GM12878 (cell line): ENCODE measurements at regions of chr1 and their contacts with region 1.

Region 1: DNA sequence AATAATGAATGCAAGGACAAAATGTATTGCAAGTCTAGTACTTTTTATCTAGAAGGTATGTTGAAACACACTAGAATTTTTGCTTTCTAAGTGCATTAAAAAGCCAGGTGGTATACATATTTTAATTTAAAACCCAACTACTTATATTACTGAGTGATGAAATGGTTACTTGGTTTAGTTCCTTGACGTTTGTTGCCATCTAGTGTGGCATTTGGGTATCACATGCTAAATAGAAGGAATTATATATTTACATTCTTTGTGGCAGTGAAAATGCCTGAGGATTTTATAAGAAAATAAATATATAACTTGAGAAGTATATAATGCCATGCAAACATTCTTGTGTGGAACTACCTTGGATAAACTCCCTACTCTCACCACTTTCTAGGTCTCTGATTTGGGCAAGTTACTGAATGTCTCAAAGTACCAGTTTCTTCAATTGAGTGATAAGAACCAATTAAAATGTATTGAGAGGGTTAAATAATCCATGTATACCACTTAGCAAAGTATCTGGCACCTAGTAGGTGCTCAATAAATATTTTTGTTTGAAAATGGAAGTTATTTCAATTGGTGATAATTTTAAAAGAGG is 69.6 kb downstream of the SDCCAG8 start:
- DNase-seq: no peak
- ATAC-seq: peak; percentile 74
- H3K4me3 ChIP-seq: no peak overlapping the region
- H3K27ac ChIP-seq: no peak overlapping the region
- H3K4me1 ChIP-seq: no peaks in the 10 kb centered on the region
- H3K27me3 ChIP-seq: no peaks in the 10 kb centered on the region
- CTCF ChIP-seq: peak; percentile 53 to 78 (median 63)
- EP300 ChIP-seq: no peak
- POLR2A ChIP-seq: no peak
- RAD21 ChIP-seq: peak; percentile 95

Region 2: DNA sequence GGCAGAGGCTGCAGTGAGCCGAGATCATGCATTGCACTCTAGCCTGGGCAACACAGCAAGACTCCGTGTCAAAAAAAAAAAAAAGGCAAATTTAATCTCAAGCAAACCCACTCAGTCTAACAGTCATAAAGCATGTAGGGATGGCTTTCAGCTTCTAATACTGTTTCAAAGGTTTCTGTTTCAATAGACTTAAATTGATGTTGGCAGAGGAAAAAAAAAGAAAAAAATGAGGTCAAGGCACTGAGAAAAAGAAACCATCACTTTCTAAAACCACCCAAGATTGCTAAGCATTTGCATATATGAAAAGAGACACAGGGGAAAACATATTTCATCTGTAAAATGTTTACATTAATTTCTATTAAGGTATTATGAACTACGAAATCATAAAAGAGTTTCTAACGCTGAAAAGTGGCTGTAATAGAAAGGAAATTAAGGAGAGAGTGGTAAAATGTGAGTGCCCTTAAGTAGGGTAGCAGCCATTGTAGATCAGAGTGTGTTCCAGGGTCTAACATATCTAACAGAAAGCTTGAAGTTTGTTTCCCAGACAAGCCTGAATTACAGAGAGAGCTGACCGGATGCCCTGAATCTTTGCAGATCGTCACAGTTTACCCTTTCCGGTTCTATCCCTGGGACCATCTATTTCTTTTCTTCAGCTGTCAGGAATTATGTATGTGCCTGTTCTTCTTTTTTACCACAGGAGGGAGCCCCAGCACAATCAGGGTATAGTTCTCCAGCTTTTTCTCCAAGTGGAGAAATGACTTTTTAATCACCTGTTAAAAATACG is 870.9 kb before region 1 on chr1:
- CTCF ChIA-PET with region 1: interaction called, 6 read pairs
- POLR2A ChIA-PET with region 1: no interaction called
- RAD21 ChIA-PET with region 1: no interaction called
- SMC1A ChIA-PET with region 1: interaction called, 3 read pairs
- in situ Hi-C with region 1: no loop called
- intact Hi-C with region 1: loop called (anchors 5 kb)
- DNase-seq: no peak
- ATAC-seq: peak; percentile 74
- H3K4me3 ChIP-seq: no peak overlapping the region
- H3K27ac ChIP-seq: no peak overlapping the region
- H3K4me1 ChIP-seq: no peaks in the 10 kb centered on the region
- H3K27me3 ChIP-seq: 0 out of 4 replicates have a peak, but pooled peaks cover 0 to 3% of the 10 kb centered on the region in 2 experiments
- CTCF ChIP-seq: peak; percentile 55 to 57 (median 55)
- EP300 ChIP-seq: no peak
- POLR2A ChIP-seq: no peak
- RAD21 ChIP-seq: peak; percentile 61

Region 3: GRCh38 chr1:242467556-242468145 is 857.7 kb before region 1 on chr1:
- CTCF ChIA-PET with region 1: no interaction called
- POLR2A ChIA-PET with region 1: no interaction called
- RAD21 ChIA-PET with region 1: no interaction called
- SMC1A ChIA-PET with region 1: no interaction called
- in situ Hi-C with region 1: loop called (anchors 10 kb)
- intact Hi-C with region 1: loop called (anchors 2 kb)
- DNase-seq: no peak
- ATAC-seq: peak; percentile 69
- H3K4me3 ChIP-seq: no peak overlapping the region
- H3K27ac ChIP-seq: no peak overlapping the region
- H3K4me1 ChIP-seq: no peaks in the 10 kb centered on the region
- H3K27me3 ChIP-seq: no peaks in the 10 kb centered on the region
- CTCF ChIP-seq: peak; percentile 56 to 66 (median 58); a peak in 5 of 6 replicates
- EP300 ChIP-seq: no peak
- POLR2A ChIP-seq: no peak
- RAD21 ChIP-seq: peak; percentile 58

Region 4: GRCh38 chr1:242651817-242652216 is 673.6 kb before region 1 on chr1:
- CTCF ChIA-PET with region 1: interaction called, 4 read pairs
- POLR2A ChIA-PET with region 1: no interaction called
- RAD21 ChIA-PET with region 1: no interaction called
- SMC1A ChIA-PET with region 1: no interaction called
- in situ Hi-C with region 1: no loop called
- intact Hi-C with region 1: loop called (anchors 5 kb)
- DNase-seq: no peak
- ATAC-seq: peak; percentile 42; the same call in 2 of the 3 replicates
- H3K4me3 ChIP-seq: no peak overlapping the region
- H3K27ac ChIP-seq: no peak overlapping the region
- H3K4me1 ChIP-seq: no peaks in the 10 kb centered on the region
- H3K27me3 ChIP-seq: no peaks in the 10 kb centered on the region; a peak in 1 of 4 replicates
- CTCF ChIP-seq: peak; percentile 37 to 41 (median 39); a peak in 3 of 6 replicates
- EP300 ChIP-seq: no peak
- POLR2A ChIP-seq: no peak
- RAD21 ChIP-seq: 0 out of 2 replicates have a peak, but pooled peaks have one; percentile 21

Region 5: GRCh38 chr1:242710286-242710685 is 615.1 kb before region 1 on chr1:
- CTCF ChIA-PET with region 1: no interaction called
- POLR2A ChIA-PET with region 1: no interaction called
- RAD21 ChIA-PET with region 1: no interaction called
- SMC1A ChIA-PET with region 1: no interaction called
- in situ Hi-C with region 1: no loop called
- intact Hi-C with region 1: no loop called
- DNase-seq: no peak
- ATAC-seq: no peak
- H3K4me3 ChIP-seq: no peak overlapping the region
- H3K27ac ChIP-seq: no peak overlapping the region
- H3K4me1 ChIP-seq: no peaks in the 10 kb centered on the region
- H3K27me3 ChIP-seq: no peaks in the 10 kb centered on the region
- CTCF ChIP-seq: no peak
- EP300 ChIP-seq: no peak
- POLR2A ChIP-seq: no peak
- RAD21 ChIP-seq: no peak

Region 6: DNA sequence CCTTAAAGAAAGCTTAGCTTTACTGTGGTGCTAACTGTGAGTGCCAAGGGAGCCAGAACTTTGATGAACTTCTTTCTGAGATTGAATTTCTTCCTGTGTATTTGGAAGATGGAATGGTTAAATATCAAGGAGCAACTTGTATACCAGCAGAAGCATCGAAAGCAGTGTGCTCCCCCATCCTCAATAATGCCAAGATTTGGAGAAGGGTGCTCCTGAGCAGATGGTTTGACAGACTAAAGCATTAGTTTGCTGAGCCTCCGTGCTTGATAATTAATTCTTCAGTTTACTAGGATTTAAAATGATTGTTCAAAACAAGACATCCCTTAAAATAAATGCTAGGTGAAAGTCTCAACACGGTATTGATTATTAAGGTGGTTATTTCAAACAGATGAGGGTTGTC is 567.1 kb after region 1 on chr1:
- CTCF ChIA-PET with region 1: no interaction called
- POLR2A ChIA-PET with region 1: no interaction called
- RAD21 ChIA-PET with region 1: no interaction called
- SMC1A ChIA-PET with region 1: no interaction called
- in situ Hi-C with region 1: no loop called
- intact Hi-C with region 1: no loop called
- DNase-seq: no peak
- ATAC-seq: no peak
- H3K4me3 ChIP-seq: no peak overlapping the region
- H3K27ac ChIP-seq: no peak overlapping the region
- H3K4me1 ChIP-seq: no peaks in the 10 kb centered on the region
- H3K27me3 ChIP-seq: no peaks in the 10 kb centered on the region
- CTCF ChIP-seq: no peak
- EP300 ChIP-seq: no peak
- POLR2A ChIP-seq: no peak
- RAD21 ChIP-seq: no peak